GM10248 (cell line): ENCODE measurements at regions of chr3 and their contacts with region 1.

Region 1: DNA sequence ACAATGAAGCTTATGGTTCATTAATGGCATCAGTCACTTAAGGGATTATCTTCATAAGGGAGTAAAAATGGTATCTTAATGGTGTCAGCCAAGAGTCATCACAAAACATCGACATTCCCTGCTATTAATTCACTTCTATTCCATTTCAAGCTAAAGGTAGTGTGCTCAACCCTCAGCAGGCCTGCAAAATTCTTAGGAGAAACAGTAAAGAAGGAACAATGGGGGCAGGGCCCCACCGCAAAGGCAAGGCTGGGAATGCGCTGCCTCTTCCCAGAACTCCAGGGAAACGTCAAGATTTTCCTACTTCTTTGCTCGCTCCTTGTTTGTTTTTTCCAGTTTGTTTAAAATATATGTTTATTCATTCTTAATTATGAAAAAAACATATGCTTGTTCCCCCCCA is 187.3 kb upstream of the TSC22D2 start:
- DNase-seq: no peak
- CTCF ChIP-seq: no peak

Region 2: DNA sequence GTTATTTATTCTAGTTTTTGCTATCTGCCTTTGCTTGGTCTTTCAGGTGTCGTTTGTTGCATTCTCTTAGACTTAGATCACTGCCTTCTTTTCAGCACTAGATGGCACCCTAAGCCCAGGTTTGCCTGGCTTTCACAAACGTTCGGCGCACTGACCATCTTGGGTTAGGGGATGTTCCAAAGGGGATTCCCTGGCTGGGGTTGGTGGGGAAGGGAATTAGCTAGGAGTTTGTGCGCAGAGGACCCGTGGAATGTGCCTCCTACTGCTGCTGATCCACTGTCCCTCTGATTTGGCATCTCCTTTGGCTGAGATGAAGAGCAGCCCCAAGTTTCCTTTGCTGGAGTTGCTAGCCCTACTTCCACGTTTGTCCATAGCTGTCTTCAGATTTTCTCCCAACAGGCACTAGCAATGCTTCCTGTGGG is 284.0 kb before region 1 on chr3:
- CTCF ChIA-PET with region 1: interaction called, 15 read pairs
- POLR2A ChIA-PET with region 1: no interaction called
- DNase-seq: peak; percentile 40
- CTCF ChIP-seq: peak; percentile 58

Region 3: GRCh38 chr3:150097588-150097890 is 123.3 kb before region 1 on chr3:
- CTCF ChIA-PET with region 1: no interaction called
- POLR2A ChIA-PET with region 1: no interaction called
- DNase-seq: no peak
- CTCF ChIP-seq: no peak

Region 4: DNA sequence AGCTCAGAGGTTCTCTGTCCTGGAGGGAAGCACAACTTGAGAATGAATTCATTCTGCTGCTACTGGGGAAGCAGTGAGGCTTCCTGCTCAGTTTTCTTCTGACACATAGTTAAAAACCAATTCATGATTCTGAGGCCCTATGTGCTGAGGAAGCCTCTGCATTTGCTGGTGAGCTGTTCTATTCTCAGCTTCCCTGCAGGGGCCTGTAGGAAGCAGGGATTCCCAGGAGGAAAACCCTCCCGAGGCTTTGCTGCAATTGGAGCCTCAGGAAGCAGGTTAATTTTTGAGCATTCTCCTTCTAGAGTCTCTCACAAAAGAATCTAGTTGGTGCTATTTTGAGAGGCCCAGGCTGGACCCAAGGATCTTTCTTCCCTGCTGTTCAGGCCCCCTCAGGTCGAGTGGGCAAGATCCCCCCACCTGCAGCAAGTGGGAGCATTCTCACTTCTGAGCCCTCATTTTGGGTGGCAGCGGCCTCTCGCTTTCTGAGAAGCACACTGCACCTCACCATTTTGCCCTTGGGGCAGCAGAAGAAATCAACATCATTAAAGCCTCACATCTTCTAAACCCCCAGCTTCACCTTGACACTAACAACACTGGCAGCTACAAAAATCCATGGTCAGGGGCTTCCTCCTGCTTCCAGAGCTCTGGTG is 10.2 kb before region 1 on chr3:
- CTCF ChIA-PET with region 1: interaction called, 15 read pairs
- POLR2A ChIA-PET with region 1: no interaction called
- DNase-seq: no peak
- CTCF ChIP-seq: no peak

Region 5: DNA sequence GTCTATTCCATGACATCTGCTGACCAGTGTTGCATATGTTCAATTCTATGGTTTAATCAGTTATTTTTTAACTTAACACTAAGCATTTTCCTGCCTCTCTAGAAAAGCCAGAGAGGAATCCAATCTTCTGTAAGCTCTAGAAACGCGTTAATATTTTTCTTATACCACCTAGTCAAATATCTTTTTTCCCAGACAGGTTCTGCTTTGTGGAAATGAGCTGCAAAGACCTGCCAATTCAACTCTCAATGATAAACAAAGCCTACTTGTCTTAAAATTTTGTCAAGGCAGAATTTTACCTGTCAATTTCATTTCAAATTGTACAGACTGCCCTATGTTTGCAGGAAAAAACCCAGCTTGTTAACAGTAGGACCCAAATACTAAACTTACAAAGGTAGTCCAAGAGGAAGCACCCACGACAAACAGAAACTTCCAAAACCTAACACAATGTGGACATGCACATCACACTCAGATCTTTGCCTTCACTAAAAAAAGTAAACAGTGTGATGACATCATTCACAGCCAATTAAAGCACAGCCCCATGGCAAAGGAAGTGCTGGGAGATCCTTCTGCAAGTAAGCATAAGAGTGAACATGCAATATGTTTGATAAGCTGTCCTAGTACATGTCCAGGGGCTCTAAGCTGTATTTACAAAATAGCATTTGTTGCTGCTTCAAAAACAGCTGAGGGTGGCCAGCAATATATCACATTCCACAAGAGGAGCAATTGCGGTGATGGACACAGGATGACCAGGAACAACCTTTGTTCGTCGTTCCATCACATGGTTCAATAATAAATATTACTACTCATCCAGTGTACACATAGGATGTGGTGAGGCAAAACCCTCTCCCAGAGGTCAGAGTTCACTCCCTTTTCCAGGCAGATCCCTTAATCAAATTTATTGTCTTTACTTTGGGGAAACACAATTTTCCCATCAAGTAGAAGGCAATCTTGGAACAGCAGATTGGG is 47.9 kb after region 1 on chr3:
- CTCF ChIA-PET with region 1: no interaction called
- POLR2A ChIA-PET with region 1: no interaction called
- DNase-seq: no peak
- CTCF ChIP-seq: no peak